Right cardiac atrium (tissue), 5 donors: ENCODE measurements at regions of chr19 and their contacts with region 1.

Region 1: GRCh38 chr19:15251749-15252397 is 19.6 kb upstream of the EPHX3 start:
- DNase-seq: peak; percentile 91 to 96 (median 94)
- ATAC-seq: peak; percentile 76 to 82
- H3K4me3 ChIP-seq: no peak overlapping the region
- H3K27ac ChIP-seq: peak overlapping the region; percentile 76
- H3K4me1 ChIP-seq: peaks cover 37% of the 10 kb centered on the region
- H3K27me3 ChIP-seq: no peaks in the 10 kb centered on the region

Region 2: GRCh38 chr19:15129856-15130597 is 121.8 kb before region 1 on chr19:
- intact Hi-C with region 1: no loop called
- DNase-seq: no peak
- ATAC-seq: no peak
- H3K4me3 ChIP-seq: no peak overlapping the region
- H3K27ac ChIP-seq: no peak overlapping the region
- H3K4me1 ChIP-seq: no peaks in the 10 kb centered on the region
- H3K27me3 ChIP-seq: no peaks in the 10 kb centered on the region

Region 3: GRCh38 chr19:15177269-15178116 is 74.4 kb before region 1 on chr19:
- intact Hi-C with region 1: loop called in 1 of 4 experiments (anchors 5 kb)
- DNase-seq: peak; percentile 81 to 94 (median 93)
- ATAC-seq: peak; percentile 79 to 86
- H3K4me3 ChIP-seq: peak overlapping the region; percentile 27
- H3K27ac ChIP-seq: no peak overlapping the region
- H3K4me1 ChIP-seq: no peaks in the 10 kb centered on the region
- H3K27me3 ChIP-seq: no peaks in the 10 kb centered on the region